Dendritic cell treated with granulocyte-macrophage colony-stimulating factor and Interleukin-4, amounts not matched to agents 40 ng/mL and 50 ng/mL, for 4 days (primary cell): ENCODE measurements at regions of chr1 and their contacts with region 1.

Region 1: GRCh38 chr1:206824331-206824730 is 41.1 kb upstream of the IL20 start:
- H3K4me3 Mint-ChIP-seq: peak overlapping the region; percentile 48
- H3K27ac Mint-ChIP-seq: peak overlapping the region; percentile 78
- H3K4me1 Mint-ChIP-seq: peaks cover 64% of the 10 kb centered on the region
- H3K27me3 Mint-ChIP-seq: peaks cover 6% of the 10 kb centered on the region

Region 2: GRCh38 chr1:206856674-206857464 is 32.5 kb after region 1 on chr1:
- intact Hi-C with region 1: loop called (anchors 5 kb)
- H3K4me3 Mint-ChIP-seq: no peak overlapping the region
- H3K27ac Mint-ChIP-seq: peak overlapping the region; percentile 89
- H3K4me1 Mint-ChIP-seq: peaks cover 56% of the 10 kb centered on the region
- H3K27me3 Mint-ChIP-seq: peaks cover 9% of the 10 kb centered on the region